Left colon (tissue), 2 donors: ENCODE measurements at regions of chr2 and their contacts with region 1.

Region 1: DNA sequence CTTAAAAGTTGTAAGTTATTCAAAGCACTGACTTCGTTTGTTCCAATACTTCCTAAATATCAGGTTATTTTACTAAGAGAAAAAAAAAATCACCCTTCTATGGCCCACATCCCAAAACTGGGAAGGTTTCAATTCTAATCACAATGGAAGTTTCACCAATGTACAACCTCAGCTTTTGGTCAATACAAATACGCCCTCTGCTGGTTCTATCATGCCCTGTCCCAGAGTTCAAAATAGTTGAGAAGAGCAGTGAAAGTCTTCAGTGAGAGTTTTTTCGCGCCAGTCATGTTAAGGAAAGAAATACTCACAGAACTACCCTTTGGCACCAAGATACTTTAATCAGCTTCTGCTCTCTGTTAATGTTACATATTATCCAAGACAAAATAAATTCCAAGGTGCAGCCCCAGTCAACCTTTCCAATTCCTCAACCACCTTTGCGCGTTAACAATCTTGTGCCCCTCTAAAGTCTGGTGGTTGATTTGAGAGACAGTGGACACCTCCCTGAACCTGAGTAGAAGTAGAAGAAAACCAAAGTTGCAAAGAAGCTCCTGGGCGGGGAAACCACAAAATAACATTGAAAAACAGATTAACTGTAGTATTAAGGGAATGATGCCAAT is 59.9 kb downstream of the SUMO1 start:
- DNase-seq: peak in 1 of 2 donors; percentile 45
- ATAC-seq: peak; percentile 77

Region 2: GRCh38 chr2:201793631-201794030 is 384.8 kb before region 1 on chr2:
- intact Hi-C with region 1: loop called in 1 of 2 experiments (anchors 5 kb)
- DNase-seq: no peak
- ATAC-seq: no peak

Region 3: GRCh38 chr2:201860636-201861066 is 317.8 kb before region 1 on chr2:
- intact Hi-C with region 1: loop called (anchors 5 to 10 kb)
- DNase-seq: peak in 1 of 2 donors; percentile 22
- ATAC-seq: peak; percentile 80

Region 4: GRCh38 chr2:202033321-202034248 is 144.9 kb before region 1 on chr2 and contains the start of gene FZD7:
- intact Hi-C with region 1: loop called in 1 of 2 experiments (anchors 5 kb)
- DNase-seq: peak; percentile 93 to 94
- ATAC-seq: peak; percentile 90
- total RNA-seq, gene FZD7: 1.4 to 10.0 TPM